HCT116 (cell line): ENCODE measurements at regions of chr19 and their contacts with region 1.

Region 1: GRCh38 chr19:54390942-54391577 is 24.2 kb upstream of the TTYH1 start:
- DNase-seq: peak; percentile 68
- ATAC-seq: peak; percentile 70
- H3K4me3 ChIP-seq: no peak overlapping the region
- H3K27ac ChIP-seq: no peak overlapping the region
- H3K4me1 ChIP-seq: peaks cover 7 to 14% of the 10 kb centered on the region in 2 experiments; a peak in 3 of 4 replicates
- H3K27me3 ChIP-seq: peaks cover 12% of the 10 kb centered on the region; the same call in 1 of the 2 replicates
- CTCF ChIP-seq: peak; percentile 71 to 84 (median 72); a peak in 5 of 6 replicates
- POLR2A ChIP-seq: no peak
- RAD21 ChIP-seq: peak; percentile 69

Region 2: GRCh38 chr19:54231077-54231931 is 159.8 kb before region 1 on chr19:
- CTCF ChIA-PET with region 1: no interaction called
- POLR2A ChIA-PET with region 1: no interaction called
- RAD21 ChIA-PET with region 1: no interaction called
- intact Hi-C with region 1: loop called (anchors 5 kb)
- DNase-seq: peak; percentile 81
- ATAC-seq: peak; percentile 97
- H3K4me3 ChIP-seq: no peak overlapping the region
- H3K27ac ChIP-seq: no peak overlapping the region
- H3K4me1 ChIP-seq: peaks cover 5 to 15% of the 10 kb centered on the region in 2 experiments; a peak in 3 of 4 replicates
- H3K27me3 ChIP-seq: no peaks in the 10 kb centered on the region
- CTCF ChIP-seq: peak; percentile 98 to 100 (median 100)
- POLR2A ChIP-seq: no peak
- RAD21 ChIP-seq: peak; percentile 87

Region 3: GRCh38 chr19:54266133-54266532 is 124.9 kb before region 1 on chr19:
- CTCF ChIA-PET with region 1: interaction called, 12 read pairs
- POLR2A ChIA-PET with region 1: no interaction called
- RAD21 ChIA-PET with region 1: interaction called in 1 of 2 experiments, 3 read pairs
- intact Hi-C with region 1: no loop called
- DNase-seq: peak; percentile 77
- ATAC-seq: peak; percentile 99
- H3K4me3 ChIP-seq: no peak overlapping the region
- H3K27ac ChIP-seq: no peak overlapping the region
- H3K4me1 ChIP-seq: no peaks in the 10 kb centered on the region
- H3K27me3 ChIP-seq: peaks cover 23% of the 10 kb centered on the region
- CTCF ChIP-seq: peak; percentile 60 to 90 (median 77); a peak in 5 of 6 replicates
- POLR2A ChIP-seq: no peak
- RAD21 ChIP-seq: peak; percentile 52

Region 4: GRCh38 chr19:54325194-54325621 is 65.9 kb before region 1 on chr19:
- CTCF ChIA-PET with region 1: no interaction called
- POLR2A ChIA-PET with region 1: no interaction called
- RAD21 ChIA-PET with region 1: no interaction called
- intact Hi-C with region 1: loop called (anchors 1 kb)
- DNase-seq: peak; percentile 31
- ATAC-seq: peak; percentile 85
- H3K4me3 ChIP-seq: no peak overlapping the region
- H3K27ac ChIP-seq: no peak overlapping the region
- H3K4me1 ChIP-seq: no peaks in the 10 kb centered on the region
- H3K27me3 ChIP-seq: no peaks in the 10 kb centered on the region
- CTCF ChIP-seq: peak; percentile 64 to 91 (median 81); a peak in 5 of 6 replicates
- POLR2A ChIP-seq: no peak
- RAD21 ChIP-seq: peak; percentile 52

Region 5: DNA sequence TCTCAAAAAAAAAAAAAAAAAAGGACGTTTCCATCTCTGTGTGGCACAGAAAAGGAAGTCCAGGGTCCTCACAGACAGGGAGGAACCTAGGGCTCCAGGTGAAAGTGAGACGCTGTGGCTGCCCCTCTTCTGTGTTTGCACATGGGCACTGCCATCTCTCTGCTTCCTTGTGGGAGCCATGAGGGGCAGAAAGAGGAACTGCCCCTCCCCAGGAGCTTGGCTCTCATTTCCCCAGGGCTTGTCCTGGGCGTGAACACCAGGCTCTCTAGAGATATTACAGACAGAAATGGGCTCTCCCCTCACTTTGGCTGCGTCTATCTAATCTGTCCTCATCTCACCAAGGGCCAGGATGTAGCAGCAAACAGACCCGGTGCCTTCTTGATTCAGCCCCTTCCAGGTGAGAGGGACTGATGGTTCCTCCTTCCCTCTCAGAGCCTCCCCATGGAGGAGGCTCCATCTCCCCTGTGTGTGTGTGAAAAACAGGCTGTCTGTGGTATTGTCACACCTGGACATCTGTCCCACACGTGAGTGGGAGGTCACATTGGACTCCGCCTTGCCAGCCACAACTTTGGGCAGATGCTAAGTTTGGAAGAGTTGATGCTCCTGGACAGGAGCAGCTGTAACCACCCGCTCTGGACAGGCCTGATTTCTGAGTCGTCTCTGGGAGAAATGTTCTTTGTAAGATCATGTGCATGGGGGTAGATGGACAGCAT is 51.3 kb before region 1 on chr19:
- CTCF ChIA-PET with region 1: no interaction called
- POLR2A ChIA-PET with region 1: no interaction called
- RAD21 ChIA-PET with region 1: no interaction called
- intact Hi-C with region 1: no loop called
- DNase-seq: no peak
- ATAC-seq: no peak
- H3K4me3 ChIP-seq: no peak overlapping the region
- H3K27ac ChIP-seq: no peak overlapping the region
- H3K4me1 ChIP-seq: no peaks in the 10 kb centered on the region
- H3K27me3 ChIP-seq: no peaks in the 10 kb centered on the region
- CTCF ChIP-seq: no peak
- POLR2A ChIP-seq: no peak
- RAD21 ChIP-seq: no peak

Region 6: GRCh38 chr19:54439174-54439853 is 48.3 kb after region 1 on chr19:
- CTCF ChIA-PET with region 1: interaction called, 17 read pairs
- POLR2A ChIA-PET with region 1: interaction called, 3 read pairs
- RAD21 ChIA-PET with region 1: interaction called in 1 of 2 experiments, 4 read pairs
- intact Hi-C with region 1: no loop called
- DNase-seq: no peak
- ATAC-seq: peak; percentile 94
- H3K4me3 ChIP-seq: no peak overlapping the region
- H3K27ac ChIP-seq: no peak overlapping the region
- H3K4me1 ChIP-seq: peaks cover 0 to 6% of the 10 kb centered on the region in 2 experiments; a peak in 1 of 4 replicates
- H3K27me3 ChIP-seq: no peaks in the 10 kb centered on the region
- CTCF ChIP-seq: peak; percentile 57 to 62 (median 59)
- POLR2A ChIP-seq: no peak
- RAD21 ChIP-seq: peak; percentile 69

Region 7: DNA sequence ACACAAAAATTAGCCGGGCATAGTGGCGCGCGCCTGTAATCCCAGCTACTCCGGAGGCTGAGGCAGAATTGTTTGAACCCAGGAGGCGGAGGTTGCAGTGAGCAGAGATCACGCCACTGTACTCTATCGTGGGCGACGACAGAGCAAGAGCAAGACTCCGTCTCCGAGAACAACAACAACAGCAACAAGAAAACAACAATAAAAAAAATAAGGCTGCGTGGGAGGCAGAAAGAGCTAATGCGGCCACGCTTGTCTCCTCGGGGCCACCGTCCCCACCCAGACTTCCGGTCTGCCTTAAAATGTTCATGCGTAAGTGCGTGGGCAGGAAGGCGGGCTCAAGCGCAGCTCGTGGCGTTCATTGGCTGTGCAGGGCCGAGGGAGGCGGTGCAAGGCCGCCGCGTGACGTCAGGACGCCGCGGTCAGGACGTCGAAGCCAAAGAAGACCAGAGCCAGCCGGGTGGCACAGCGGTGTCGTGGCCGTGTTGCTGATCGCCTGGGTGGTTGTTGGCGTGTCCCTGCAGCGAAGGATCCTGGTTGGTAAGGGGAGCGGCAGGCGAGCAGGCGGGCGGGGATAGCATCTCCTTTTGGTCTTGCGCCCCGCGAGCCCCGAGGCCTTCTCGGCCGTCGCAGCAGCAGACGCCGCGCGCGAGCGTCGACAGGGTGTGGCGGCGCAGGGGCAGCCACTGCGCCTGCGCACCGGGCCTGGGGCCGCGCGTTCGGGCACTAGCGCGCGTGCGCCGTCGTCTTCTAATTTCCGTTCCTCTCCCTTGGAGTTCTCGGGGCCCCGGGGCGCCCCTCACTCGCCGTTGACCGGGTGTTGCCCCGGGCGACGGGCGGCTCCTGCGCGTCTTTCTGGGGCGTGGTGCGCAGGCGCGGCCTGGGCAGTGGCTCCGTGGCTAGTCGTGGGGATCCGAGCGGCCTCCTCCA is 58.0 kb after region 1 on chr19 and contains the start of gene LENG8:
- CTCF ChIA-PET with region 1: interaction called, 10 read pairs
- POLR2A ChIA-PET with region 1: interaction called, 6 read pairs
- RAD21 ChIA-PET with region 1: no interaction called
- intact Hi-C with region 1: no loop called
- DNase-seq: peak; percentile 97
- ATAC-seq: peak; percentile 93
- H3K4me3 ChIP-seq: peak within 1 kb of the TSS; percentile 64 to 97
- H3K27ac ChIP-seq: peak within 1 kb of the TSS; percentile 90
- H3K4me1 ChIP-seq: peaks cover 12 to 25% of the 10 kb centered on the region in 2 experiments; a peak in 3 of 4 replicates
- H3K27me3 ChIP-seq: no peaks in the 10 kb centered on the region
- CTCF ChIP-seq: no peak
- POLR2A ChIP-seq: peak; percentile 83
- RAD21 ChIP-seq: no peak
- total RNA-seq, gene LENG8: 196 TPM